Activated CD8-positive, alpha-beta memory T cell treated with anti-CD3 and anti-CD28 coated beads, Interleukin-2, amount 10 ng/mL, durations not matched to agents 7 days and 5 days (primary cell): ENCODE measurements at regions of chr10 and their contacts with region 1.

Region 1: GRCh38 chr10:11757821-11758463 is 15.8 kb downstream of the ECHDC3 start:
- DNase-seq: peak; percentile 91
- ATAC-seq: peak; percentile 98
- H3K4me3 Mint-ChIP-seq: no peak overlapping the region
- H3K27ac Mint-ChIP-seq: no peak overlapping the region
- H3K4me1 Mint-ChIP-seq: no peaks in the 10 kb centered on the region
- H3K27me3 Mint-ChIP-seq: peaks cover 7% of the 10 kb centered on the region

Region 2: GRCh38 chr10:11522821-11523245 is 235.1 kb before region 1 on chr10:
- CTCF ChIA-PET with region 1: interaction called, 17 read pairs
- DNase-seq: no peak
- ATAC-seq: no peak
- H3K4me3 Mint-ChIP-seq: no peak overlapping the region
- H3K27ac Mint-ChIP-seq: no peak overlapping the region
- H3K4me1 Mint-ChIP-seq: peaks cover 7% of the 10 kb centered on the region
- H3K27me3 Mint-ChIP-seq: no peaks in the 10 kb centered on the region

Region 3: GRCh38 chr10:11825796-11826414 is 68.0 kb after region 1 on chr10:
- CTCF ChIA-PET with region 1: no interaction called
- DNase-seq: no peak
- ATAC-seq: no peak
- H3K4me3 Mint-ChIP-seq: no peak overlapping the region
- H3K27ac Mint-ChIP-seq: no peak overlapping the region
- H3K4me1 Mint-ChIP-seq: peaks cover 6% of the 10 kb centered on the region
- H3K27me3 Mint-ChIP-seq: peaks cover 58% of the 10 kb centered on the region